ENCODE measurements at regions of chr12 and their contacts with region 1.

Region 1: GRCh38 chr12:25052196-25052913 is 103.5 kb upstream of the BCAT1 start:
- DNase-seq: peak; percentile 87
- H3K4me3 Mint-ChIP-seq: peak overlapping the region; percentile 93
- H3K27ac Mint-ChIP-seq: peak overlapping the region; percentile 99
- H3K4me1 Mint-ChIP-seq: peaks cover 45% of the 10 kb centered on the region
- H3K27me3 Mint-ChIP-seq: peaks cover 3% of the 10 kb centered on the region

Region 2: GRCh38 chr12:24719293-24719721 is 333.0 kb before region 1 on chr12:
- intact Hi-C with region 1: loop called (anchors 10 kb)
- DNase-seq: peak; percentile 78
- H3K4me3 Mint-ChIP-seq: peak overlapping the region; percentile 15
- H3K27ac Mint-ChIP-seq: peak overlapping the region; percentile 78
- H3K4me1 Mint-ChIP-seq: peaks cover 23% of the 10 kb centered on the region
- H3K27me3 Mint-ChIP-seq: no peaks in the 10 kb centered on the region

Region 3: DNA sequence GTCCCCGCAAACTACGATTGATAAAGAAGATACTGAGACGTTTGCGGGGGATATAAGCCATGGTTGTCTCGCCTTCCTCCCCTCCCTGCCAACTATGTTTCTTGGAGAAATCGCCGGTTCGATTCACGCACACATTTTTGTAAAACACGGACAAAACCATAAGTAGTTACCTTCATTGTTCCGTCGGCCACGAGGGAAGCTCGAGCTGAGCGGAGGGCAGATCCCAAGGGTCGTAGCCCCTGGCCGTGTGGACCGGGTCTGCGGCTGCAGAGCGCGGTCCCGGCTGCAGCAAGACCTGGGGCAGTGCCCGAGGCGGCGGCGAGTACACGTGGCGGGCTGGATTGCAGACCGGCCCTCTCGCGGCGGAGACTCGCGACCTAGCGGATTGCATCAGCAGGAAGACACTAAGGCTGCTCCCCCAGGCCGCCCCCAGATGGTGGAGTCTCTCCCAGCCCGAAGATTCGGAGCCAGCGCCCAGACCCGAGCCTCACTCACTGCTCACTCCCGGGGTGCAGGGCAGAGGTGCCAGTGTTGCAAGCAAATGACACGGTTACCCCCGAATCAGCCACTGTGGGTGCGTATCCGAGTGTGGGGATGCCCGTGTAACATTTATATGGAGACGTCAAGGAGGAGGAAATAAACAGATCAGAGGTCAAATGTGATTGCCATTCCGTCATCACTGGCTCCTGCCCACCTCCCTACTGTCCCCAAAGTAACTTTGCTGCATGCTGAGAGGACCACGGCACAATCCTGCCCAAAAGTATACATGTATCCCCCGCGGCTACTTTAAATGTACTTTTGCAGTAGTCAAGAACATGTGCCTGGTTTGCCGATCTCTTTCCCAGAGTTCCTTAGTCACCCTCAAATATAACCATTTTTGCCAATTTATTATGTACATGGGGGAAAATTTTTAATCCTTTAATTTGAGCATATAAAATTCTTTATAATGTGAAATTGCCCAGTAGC is 103.3 kb before region 1 on chr12 and contains the start of gene BCAT1:
- intact Hi-C with region 1: loop called (anchors 2 kb)
- DNase-seq: peak; percentile 82
- H3K4me3 Mint-ChIP-seq: peak within 1 kb of the TSS; percentile 92
- H3K27ac Mint-ChIP-seq: peak within 1 kb of the TSS; percentile 93
- H3K4me1 Mint-ChIP-seq: peaks cover 52% of the 10 kb centered on the region
- H3K27me3 Mint-ChIP-seq: peaks cover 8% of the 10 kb centered on the region
- total RNA-seq, gene BCAT1: 49.7 and 51.9 TPM in 2 replicates

Region 4: DNA sequence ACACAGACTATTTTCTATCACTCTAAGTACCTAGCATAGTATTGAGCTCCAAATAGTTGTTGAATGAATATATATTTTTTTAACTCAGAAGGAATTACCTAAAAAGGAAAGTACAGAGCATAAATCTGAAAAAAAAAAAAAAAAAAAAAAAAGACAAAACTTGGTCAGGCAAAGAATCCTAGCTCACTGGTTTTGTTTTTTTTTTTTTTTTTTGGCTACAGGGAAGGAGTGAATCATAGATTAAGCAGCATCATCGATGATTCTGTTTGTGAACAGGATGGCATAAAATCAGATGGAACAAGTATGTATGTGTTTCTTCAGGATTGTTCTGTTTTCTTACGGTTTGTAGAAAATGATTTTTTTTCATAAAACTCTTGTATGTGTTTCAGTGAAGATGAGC is 37.4 kb before region 1 on chr12:
- intact Hi-C with region 1: no loop called
- DNase-seq: no peak
- H3K4me3 Mint-ChIP-seq: no peak overlapping the region
- H3K27ac Mint-ChIP-seq: no peak overlapping the region
- H3K4me1 Mint-ChIP-seq: no peaks in the 10 kb centered on the region
- H3K27me3 Mint-ChIP-seq: peaks cover 7% of the 10 kb centered on the region

Region 5: DNA sequence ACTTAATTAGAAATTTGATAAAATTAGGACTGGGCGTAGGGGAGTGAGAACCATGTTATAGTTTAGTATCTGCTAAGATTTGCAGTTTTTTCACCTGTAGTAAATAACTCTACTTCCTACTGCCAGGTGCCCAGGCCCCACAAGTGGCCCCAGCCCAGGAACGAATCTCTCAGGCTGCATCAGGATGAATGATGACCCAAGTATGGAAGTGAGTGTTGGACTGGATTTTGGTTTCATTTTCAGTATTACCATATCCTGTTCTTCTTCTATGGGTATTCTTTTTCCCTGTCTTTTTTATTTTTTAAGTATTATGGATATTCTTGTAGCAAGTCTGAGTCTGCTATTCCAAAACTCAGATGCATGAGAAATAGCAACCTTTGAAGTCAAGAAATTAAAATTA is 16.9 kb after region 1 on chr12:
- intact Hi-C with region 1: loop called (anchors 1 kb)
- DNase-seq: no peak
- H3K4me3 Mint-ChIP-seq: no peak overlapping the region
- H3K27ac Mint-ChIP-seq: no peak overlapping the region
- H3K4me1 Mint-ChIP-seq: peaks cover 22% of the 10 kb centered on the region
- H3K27me3 Mint-ChIP-seq: no peaks in the 10 kb centered on the region

Region 6: DNA sequence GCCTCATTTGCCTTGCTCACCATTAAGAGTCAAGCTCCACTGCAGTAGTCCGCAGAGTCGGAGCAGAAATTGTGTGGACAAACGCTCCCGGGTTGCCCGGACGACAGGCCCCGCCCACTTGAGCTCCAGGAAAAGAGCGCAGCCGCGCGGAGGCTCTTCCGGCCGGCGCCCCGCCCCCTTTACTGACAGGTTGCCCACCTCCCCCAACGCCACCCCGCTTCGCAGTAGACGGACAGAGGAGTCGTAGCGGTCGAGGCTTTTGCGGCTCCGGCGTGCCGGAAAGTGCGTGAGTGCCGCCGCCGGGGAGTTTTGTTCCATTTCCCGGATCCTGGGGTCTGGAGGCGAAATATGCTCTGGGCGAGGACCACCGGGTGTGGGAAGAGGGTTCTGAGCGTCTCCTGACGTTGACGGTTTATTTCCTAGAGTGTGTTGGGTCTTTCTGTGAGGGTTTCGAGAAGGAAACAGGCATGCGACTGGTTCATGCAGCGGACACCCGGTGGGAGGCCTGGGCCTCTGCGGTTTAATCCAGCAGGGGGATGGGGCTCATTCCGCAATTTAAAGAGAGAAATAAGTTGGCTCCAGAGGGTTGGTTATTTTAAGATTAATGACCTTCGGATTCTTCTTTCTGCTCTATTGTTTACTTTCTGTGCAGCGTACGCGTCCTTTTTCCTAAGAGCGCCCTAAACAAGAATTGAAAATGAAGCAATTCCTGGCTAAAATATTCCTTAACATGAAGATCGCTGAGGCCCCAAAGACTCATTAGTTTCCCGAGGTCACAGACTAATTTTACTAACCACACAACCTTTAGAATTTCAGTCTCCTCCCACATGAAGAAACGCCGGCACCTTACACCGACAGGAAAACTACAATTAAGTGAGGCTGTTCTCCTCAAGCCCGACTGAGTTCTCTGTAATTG is 143.0 kb after region 1 on chr12 and contains the starts of genes DNAI7 and ETFRF1:
- intact Hi-C with region 1: loop called (anchors 2 kb)
- DNase-seq: peak; percentile 98
- H3K4me3 Mint-ChIP-seq: peak within 1 kb of the TSS; percentile 94
- H3K27ac Mint-ChIP-seq: peak within 1 kb of the TSS; percentile 93
- H3K4me1 Mint-ChIP-seq: peaks cover 23% of the 10 kb centered on the region
- H3K27me3 Mint-ChIP-seq: no peaks in the 10 kb centered on the region
- total RNA-seq, gene DNAI7: not detected in 2 replicates
- total RNA-seq, gene ETFRF1: 9.9 TPM in 2 replicates

Region 7: GRCh38 chr12:25364529-25365339 is 312.4 kb after region 1 on chr12:
- intact Hi-C with region 1: loop called (anchors 1 kb)
- DNase-seq: no peak
- H3K4me3 Mint-ChIP-seq: peak overlapping the region; percentile 40
- H3K27ac Mint-ChIP-seq: peak overlapping the region; percentile 91
- H3K4me1 Mint-ChIP-seq: peaks cover 15% of the 10 kb centered on the region
- H3K27me3 Mint-ChIP-seq: peaks cover 5% of the 10 kb centered on the region

Measured in activated CD4-positive, alpha-beta T cell treated with anti-CD3 and anti-CD28 coated beads, Interleukin-2, amount 10 ng/mL, durations not matched to agents 24 days and 14 days (primary cell).